Activated CD4-positive, alpha-beta memory T cell treated with anti-CD3 and anti-CD28 coated beads, Interleukin-2, amount 10 ng/mL, durations not matched to agents 7 days and 5 days (primary cell): ENCODE measurements at regions of chr18 and their contacts with region 1.

Region 1: DNA sequence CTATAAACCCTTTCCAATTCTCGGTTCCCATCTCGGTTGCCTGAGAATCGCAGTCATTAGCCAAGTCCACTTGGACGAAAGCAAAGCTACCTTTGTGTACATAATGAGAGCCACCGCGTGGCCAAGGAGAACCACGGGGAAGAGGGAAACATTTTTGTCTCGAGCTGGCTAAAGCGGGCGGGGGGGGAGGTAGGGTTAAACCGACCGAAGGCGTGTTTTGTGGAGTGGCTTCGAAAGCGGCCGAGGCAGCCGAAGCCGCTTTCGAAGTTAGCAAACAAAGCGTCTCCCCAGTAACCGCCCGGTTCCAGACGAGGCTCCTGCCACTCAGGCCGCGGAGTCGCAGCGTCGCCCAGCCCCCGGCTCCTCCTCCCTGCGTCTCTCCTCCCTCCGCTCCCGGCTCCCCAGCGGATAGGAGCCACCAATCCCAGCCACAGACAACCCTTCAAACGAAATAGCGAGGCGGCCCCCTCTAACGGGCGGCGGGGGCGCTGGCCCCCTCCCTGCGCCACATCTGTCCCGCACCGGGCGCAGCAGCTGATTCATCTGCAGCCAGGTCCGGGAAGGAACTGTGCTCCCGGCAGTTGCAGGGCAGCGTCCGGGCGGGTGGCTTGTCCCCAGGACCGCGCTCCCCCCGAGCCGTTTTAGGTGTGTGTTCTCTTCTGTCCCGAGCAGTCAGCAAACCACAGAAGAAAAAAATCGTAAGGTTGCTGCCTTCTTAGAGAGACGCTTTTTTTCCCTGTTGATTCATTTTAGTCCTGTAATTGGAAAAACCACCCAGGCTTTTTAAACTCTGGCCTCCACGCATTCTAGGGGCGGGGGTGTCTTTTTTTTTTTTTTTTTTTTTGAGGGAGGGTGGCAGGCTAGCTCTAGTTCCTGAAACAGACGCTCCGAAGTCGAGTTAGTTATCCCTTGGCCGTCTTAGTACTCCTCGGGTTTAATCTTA is 1.8 kb upstream of the TGIF1 start:
- DNase-seq: peak; percentile 88
- H3K4me3 Mint-ChIP-seq: peak overlapping the region; percentile 92
- H3K27ac Mint-ChIP-seq: peak overlapping the region; percentile 99
- H3K4me1 Mint-ChIP-seq: peaks cover 31% of the 10 kb centered on the region
- H3K27me3 Mint-ChIP-seq: no peaks in the 10 kb centered on the region

Region 2: GRCh38 chr18:3261371-3262246 is 186.6 kb before region 1 on chr18 and contains the start of gene MYL12B:
- CTCF ChIA-PET with region 1: interaction called, 10 read pairs
- POLR2A ChIA-PET with region 1: interaction called, 15 read pairs
- DNase-seq: peak; percentile 86
- H3K4me3 Mint-ChIP-seq: peak within 1 kb of the TSS; percentile 89
- H3K27ac Mint-ChIP-seq: peak within 1 kb of the TSS; percentile 99
- H3K4me1 Mint-ChIP-seq: peaks cover 71% of the 10 kb centered on the region
- H3K27me3 Mint-ChIP-seq: no peaks in the 10 kb centered on the region
- total RNA-seq, gene MYL12B: 371 to 378 TPM

Region 3: DNA sequence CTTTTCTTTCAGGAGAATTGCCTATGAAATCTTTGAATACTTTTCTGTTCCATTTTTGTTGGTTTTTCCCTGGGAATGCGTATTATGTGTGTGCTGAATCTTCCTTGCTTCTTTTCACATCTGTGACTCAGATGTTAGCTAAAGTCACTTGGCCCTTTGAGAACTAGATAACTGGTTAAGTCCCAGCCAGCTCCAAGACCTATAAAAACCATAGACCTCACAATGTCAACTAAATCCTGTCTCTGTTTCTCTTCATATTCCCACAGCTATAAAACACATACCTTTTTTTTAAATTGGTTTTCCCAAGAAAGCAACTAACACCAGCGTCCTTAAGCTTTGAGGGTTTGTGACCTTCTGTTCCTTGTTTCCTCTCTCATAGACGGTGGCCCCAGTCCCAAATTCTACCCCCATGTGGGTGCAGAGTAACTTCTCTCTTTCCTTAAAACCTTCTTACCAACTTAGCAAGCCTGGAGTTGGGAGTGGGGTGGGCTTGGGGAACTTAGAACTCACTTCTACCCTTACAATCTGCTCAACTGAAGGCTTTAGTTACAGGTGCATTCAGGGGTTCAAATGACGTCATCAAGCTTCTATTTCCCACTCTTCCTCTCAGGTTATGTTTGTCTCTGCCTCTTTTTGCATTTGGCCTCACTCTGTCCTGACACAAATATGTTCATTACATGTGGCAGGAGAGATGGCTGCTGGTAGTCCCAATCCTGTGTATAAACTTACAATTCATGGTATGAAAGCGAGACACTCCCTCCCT is 56.3 kb before region 1 on chr18:
- CTCF ChIA-PET with region 1: no interaction called
- POLR2A ChIA-PET with region 1: no interaction called
- DNase-seq: no peak
- H3K4me3 Mint-ChIP-seq: no peak overlapping the region
- H3K27ac Mint-ChIP-seq: no peak overlapping the region
- H3K4me1 Mint-ChIP-seq: no peaks in the 10 kb centered on the region
- H3K27me3 Mint-ChIP-seq: peaks cover 2% of the 10 kb centered on the region

Region 4: DNA sequence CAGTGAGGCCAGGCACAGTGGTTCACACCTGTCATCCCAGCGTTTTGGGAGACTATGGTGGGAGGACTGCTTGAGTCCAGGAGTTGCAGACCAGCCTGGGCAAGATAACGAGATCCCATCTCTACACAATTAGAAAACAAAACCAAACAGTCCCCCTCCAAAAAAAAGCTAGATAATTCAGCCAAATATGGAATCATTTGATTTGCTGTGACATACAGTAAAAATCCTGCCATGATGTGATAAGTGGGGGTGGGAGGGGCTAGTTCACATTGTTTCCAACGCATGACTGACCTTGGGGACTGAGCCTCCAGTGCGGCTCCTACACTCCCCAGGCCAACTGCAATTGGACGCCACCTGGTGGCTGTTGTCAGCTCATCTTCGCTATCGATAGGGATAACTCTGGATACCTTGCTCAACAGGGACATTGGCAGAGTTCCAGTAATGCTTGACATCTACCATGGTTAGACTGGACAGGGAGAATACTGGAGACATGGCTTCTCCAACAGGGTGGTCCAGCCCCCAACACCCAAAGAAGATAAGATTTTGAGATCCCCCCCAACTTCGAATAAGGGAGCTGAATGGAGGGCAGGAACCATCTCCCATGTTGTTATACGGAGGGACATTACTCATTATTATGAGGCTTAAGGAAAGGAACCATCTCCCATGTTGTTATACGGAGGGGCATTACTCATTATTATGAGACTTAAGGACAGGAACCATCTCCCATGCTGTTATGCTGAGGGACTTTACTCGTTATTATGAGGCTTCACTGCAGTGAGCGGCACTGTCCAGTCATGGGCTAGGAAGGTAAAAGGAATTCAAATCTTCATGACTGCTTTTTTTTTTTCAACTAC is 137.7 kb after region 1 on chr18:
- CTCF ChIA-PET with region 1: interaction called, 11 read pairs
- POLR2A ChIA-PET with region 1: interaction called, 6 read pairs
- DNase-seq: peak; percentile 79
- H3K4me3 Mint-ChIP-seq: no peak overlapping the region
- H3K27ac Mint-ChIP-seq: no peak overlapping the region
- H3K4me1 Mint-ChIP-seq: peaks cover 37% of the 10 kb centered on the region
- H3K27me3 Mint-ChIP-seq: no peaks in the 10 kb centered on the region

Region 5: DNA sequence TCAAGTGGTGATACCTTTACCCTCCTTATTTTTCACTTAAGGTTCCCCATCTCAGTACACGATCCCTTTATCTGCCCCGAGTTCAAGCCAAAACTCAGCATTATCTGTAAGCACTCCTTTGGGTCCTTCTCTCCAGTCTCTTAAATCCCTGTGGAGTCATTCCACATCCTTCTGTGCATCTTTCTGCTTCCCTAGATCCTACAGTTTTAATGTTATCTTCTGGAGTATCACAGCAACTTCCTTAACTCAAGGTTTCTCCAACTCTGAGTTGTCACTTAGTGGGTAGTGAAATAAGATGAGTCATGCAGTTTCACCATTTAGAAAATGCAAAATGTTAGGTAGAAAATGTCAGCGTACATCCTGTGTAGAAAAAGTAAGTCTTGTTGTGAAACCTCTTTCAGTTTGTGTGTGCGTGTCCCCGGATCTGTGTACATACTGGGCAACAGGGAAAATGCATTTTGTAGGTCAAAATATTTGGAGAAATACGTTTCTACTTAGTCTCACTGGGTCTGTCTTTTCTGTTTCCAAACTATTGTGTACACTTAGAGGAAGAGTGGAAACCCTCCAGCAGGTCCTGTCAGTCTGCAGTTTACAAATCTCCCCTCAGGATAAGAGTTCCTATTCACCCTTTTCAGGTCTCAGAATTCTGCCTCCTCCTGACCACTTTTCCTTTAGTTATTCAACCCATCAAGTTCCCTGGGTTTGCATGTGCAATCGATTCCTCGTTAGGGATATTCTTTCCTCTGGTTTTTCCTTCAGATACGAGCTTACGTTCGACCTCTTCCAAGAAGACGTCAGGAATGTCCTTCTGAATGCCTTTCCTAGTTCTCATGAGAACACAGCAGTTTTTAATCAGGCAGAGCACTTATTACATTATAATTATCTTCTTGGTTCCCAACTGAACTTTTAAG is 156.6 kb after region 1 on chr18:
- CTCF ChIA-PET with region 1: interaction called, 4 read pairs
- POLR2A ChIA-PET with region 1: interaction called, 66 read pairs
- DNase-seq: peak; percentile 50
- H3K4me3 Mint-ChIP-seq: no peak overlapping the region
- H3K27ac Mint-ChIP-seq: no peak overlapping the region
- H3K4me1 Mint-ChIP-seq: peaks cover 18% of the 10 kb centered on the region
- H3K27me3 Mint-ChIP-seq: no peaks in the 10 kb centered on the region